GM10248 (cell line): ENCODE measurements at regions of chr12 and their contacts with region 1.

Region 1: GRCh38 chr12:24778486-24779304 is 170.2 kb downstream of the BCAT1 start:
- DNase-seq: peak; percentile 20
- CTCF ChIP-seq: peak; percentile 40

Region 2: GRCh38 chr12:23204933-23205778 is 1573.5 kb before region 1 on chr12:
- CTCF ChIA-PET with region 1: interaction called, 10 read pairs
- POLR2A ChIA-PET with region 1: no interaction called
- DNase-seq: peak; percentile 56
- CTCF ChIP-seq: peak; percentile 93

Region 3: GRCh38 chr12:24767016-24767415 is 11.7 kb before region 1 on chr12:
- CTCF ChIA-PET with region 1: interaction called, 23 read pairs
- POLR2A ChIA-PET with region 1: no interaction called
- DNase-seq: no peak
- CTCF ChIP-seq: no peak

Region 4: GRCh38 chr12:24798335-24798734 is 19.6 kb after region 1 on chr12:
- CTCF ChIA-PET with region 1: interaction called, 10 read pairs
- POLR2A ChIA-PET with region 1: no interaction called
- DNase-seq: peak; percentile 24
- CTCF ChIP-seq: no peak

Region 5: DNA sequence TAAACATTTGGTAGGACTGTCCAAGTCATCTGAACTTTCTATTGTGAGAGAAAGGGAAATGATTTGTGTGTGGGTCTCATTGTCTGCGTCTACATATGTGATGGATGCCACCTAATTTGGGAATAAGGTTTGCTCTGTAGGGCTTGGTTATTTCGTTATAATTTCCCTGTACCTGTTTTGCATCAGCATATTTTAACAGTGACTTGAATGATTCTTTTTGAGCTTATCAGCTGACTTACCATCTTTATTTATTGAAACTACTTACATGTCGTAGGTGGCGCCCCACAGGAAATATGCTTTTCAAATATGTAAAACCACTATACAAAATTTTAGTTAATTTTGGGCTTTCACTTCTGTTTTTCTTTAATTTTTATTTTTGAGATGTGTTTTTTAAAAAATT is 226.7 kb after region 1 on chr12:
- CTCF ChIA-PET with region 1: no interaction called
- POLR2A ChIA-PET with region 1: no interaction called
- DNase-seq: no peak
- CTCF ChIP-seq: no peak